CD8-positive, alpha-beta T cell (primary cell): ENCODE measurements at regions of chr19 and their contacts with region 1.

Region 1: DNA sequence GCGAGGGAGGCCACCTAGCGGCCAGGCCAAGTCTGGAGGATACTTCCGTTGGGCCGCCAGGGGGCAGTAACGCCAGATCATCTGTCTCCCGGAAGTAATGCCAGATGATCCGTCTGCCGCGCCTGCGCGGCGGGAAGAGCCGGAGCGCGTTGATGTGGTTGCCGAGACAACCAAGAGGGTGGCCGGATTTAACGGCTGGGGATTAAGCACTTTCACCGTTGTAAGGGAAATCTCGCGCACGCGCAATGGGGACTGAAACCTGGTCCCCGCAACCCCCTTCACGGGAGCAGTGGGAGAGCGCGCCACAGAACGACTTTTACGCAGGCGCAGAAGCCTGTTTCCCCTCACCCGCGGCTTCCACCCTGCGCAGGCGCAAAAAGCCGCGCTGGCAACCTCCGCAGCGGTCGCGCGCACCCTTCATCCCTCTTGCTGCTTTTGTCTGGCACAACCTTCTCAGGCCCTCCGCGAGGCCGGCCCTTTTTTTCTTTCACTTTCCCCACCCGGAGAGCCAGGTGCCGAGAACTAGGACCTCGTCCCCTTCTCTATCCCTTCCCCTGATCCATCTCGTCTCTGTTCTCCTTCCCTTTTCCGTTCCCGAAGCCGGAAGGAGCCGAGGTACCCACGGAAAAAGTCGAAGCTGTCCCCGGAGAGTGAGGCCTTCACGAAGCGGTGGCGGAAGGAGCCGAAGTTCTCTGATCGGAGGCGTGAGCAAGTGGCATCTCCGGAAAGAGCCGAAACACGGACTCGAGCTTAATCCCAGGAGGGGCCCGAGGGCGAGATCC is 886 bp upstream of the U2AF2 start:
- DNase-seq: peak; percentile 98 to 100 (median 99)
- ATAC-seq: peak; percentile 77
- H3K4me3 ChIP-seq: peak overlapping the region; percentile 72 to 89
- H3K4me3 Mint-ChIP-seq: peak overlapping the region; percentile 95
- H3K27ac ChIP-seq: peak overlapping the region; percentile 79 to 100
- H3K27ac Mint-ChIP-seq: peak overlapping the region; percentile 97
- H3K4me1 ChIP-seq: peaks cover 38% of the 10 kb centered on the region
- H3K4me1 Mint-ChIP-seq: peaks cover 44% of the 10 kb centered on the region
- H3K27me3 ChIP-seq: peaks cover 0 to 5% of the 10 kb centered on the region in 2 experiments
- H3K27me3 Mint-ChIP-seq: no peaks in the 10 kb centered on the region
- CTCF ChIP-seq: peak; percentile 100

Region 2: DNA sequence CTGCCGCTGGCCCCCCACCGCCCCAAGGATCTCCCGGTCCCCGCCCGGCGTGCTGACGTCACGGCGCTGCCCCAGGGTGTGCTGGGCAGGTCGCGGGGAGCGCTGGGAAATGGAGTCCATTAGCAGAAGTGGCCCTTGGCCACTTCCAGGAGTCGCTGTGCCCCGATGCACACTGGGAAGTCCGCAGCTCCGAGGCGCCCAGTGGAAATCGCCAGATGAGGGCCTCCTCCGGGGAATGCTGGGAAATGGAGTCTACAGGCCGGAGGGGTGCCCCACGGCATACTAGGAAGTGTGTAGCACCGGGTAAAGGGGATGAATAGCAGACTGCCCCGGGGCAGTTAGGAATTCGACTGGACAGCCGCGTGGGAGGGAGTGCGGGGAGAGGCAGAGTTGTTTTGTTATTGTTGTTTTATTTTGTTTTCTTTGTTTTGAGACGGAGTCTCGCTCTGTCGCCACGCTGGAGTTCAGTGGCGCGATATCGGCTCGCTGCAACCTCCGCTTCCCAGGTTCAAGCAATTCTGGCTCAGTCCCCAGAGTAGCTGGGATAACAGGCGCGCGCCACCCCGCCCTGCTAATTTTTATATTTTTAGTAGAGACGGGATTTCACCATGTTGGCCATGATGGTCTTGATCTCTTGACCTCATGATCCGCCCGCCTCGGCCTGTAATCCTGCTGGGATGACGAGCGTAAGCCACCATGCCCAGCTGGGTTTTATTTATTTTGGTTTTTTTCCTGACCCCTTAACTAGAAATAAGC is 536.1 kb before region 1 on chr19 and contains the start of gene PPP1R12C:
- CTCF ChIA-PET with region 1: no interaction called
- POLR2A ChIA-PET with region 1: no interaction called
- intact Hi-C with region 1: loop called in 1 of 2 experiments (anchors 10 kb)
- DNase-seq: peak; percentile 89 to 99 (median 97)
- ATAC-seq: peak; percentile 89
- H3K4me3 ChIP-seq: peak within 1 kb of the TSS; percentile 83 to 89
- H3K4me3 Mint-ChIP-seq: peak within 1 kb of the TSS; percentile 97
- H3K27ac ChIP-seq: peak within 1 kb of the TSS; percentile 61 to 84
- H3K27ac Mint-ChIP-seq: peak within 1 kb of the TSS; percentile 93
- H3K4me1 ChIP-seq: peaks cover 19% of the 10 kb centered on the region
- H3K4me1 Mint-ChIP-seq: peaks cover 34% of the 10 kb centered on the region
- H3K27me3 ChIP-seq: no peaks in the 10 kb centered on the region
- H3K27me3 Mint-ChIP-seq: no peaks in the 10 kb centered on the region
- CTCF ChIP-seq: no peak
- total RNA-seq, gene PPP1R12C: 93.8 to 97.6 TPM

Region 3: GRCh38 chr19:55476100-55476775 is 177.7 kb before region 1 on chr19 and contains the start of gene ZNF628:
- CTCF ChIA-PET with region 1: no interaction called
- POLR2A ChIA-PET with region 1: interaction called, 6 read pairs
- intact Hi-C with region 1: loop called in 1 of 2 experiments (anchors 1 kb)
- DNase-seq: peak; percentile 95 to 99 (median 98)
- ATAC-seq: peak; percentile 93
- H3K4me3 ChIP-seq: peak within 1 kb of the TSS; percentile 70 to 72
- H3K4me3 Mint-ChIP-seq: peak within 1 kb of the TSS; percentile 85
- H3K27ac ChIP-seq: peak within 1 kb of the TSS; percentile 58 to 91
- H3K27ac Mint-ChIP-seq: peak within 1 kb of the TSS; percentile 88
- H3K4me1 ChIP-seq: peaks cover 17% of the 10 kb centered on the region
- H3K4me1 Mint-ChIP-seq: peaks cover 34% of the 10 kb centered on the region
- H3K27me3 ChIP-seq: no peaks in the 10 kb centered on the region
- H3K27me3 Mint-ChIP-seq: no peaks in the 10 kb centered on the region
- CTCF ChIP-seq: no peak
- total RNA-seq, gene ZNF628: 27.0 to 27.8 TPM

Region 4: DNA sequence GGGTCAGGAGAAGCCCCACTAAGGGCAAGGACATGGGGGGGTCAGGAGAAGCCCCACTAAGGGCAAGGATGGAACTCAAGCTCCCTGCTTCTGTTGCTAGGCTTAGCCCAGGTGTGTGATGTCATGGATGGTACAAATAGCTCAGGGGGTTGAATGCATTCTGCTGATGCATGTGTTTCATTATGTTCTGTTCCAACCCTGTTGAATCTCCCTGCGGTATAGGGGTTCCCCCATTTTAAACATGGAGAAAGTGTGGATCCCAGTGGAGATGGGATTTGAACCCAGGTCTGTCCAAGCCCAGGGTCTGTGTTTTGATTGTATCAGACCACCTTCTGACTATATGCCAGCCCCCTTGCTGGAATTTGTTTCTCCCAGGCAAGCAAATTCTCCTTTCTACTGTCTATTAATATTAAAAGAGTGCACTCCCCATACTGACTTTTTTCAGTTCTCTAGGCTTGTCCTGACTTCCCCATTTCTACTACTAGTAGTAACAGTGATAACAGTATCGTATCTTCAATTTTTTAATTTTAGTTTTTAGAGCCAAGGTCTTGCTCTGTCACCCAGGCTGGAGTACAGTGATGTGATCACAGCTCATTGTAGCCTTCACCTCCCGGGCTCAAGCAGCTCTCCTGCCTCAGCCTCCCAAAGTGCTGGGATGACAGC is 41.8 kb before region 1 on chr19:
- CTCF ChIA-PET with region 1: no interaction called
- POLR2A ChIA-PET with region 1: no interaction called
- intact Hi-C with region 1: no loop called
- DNase-seq: no peak
- ATAC-seq: no peak
- H3K4me3 ChIP-seq: no peak overlapping the region
- H3K4me3 Mint-ChIP-seq: no peak overlapping the region
- H3K27ac ChIP-seq: no peak overlapping the region
- H3K27ac Mint-ChIP-seq: peak overlapping the region; percentile 2
- H3K4me1 ChIP-seq: no peaks in the 10 kb centered on the region
- H3K4me1 Mint-ChIP-seq: peaks cover 37% of the 10 kb centered on the region
- H3K27me3 ChIP-seq: no peaks in the 10 kb centered on the region
- H3K27me3 Mint-ChIP-seq: no peaks in the 10 kb centered on the region
- CTCF ChIP-seq: no peak

Region 5: DNA sequence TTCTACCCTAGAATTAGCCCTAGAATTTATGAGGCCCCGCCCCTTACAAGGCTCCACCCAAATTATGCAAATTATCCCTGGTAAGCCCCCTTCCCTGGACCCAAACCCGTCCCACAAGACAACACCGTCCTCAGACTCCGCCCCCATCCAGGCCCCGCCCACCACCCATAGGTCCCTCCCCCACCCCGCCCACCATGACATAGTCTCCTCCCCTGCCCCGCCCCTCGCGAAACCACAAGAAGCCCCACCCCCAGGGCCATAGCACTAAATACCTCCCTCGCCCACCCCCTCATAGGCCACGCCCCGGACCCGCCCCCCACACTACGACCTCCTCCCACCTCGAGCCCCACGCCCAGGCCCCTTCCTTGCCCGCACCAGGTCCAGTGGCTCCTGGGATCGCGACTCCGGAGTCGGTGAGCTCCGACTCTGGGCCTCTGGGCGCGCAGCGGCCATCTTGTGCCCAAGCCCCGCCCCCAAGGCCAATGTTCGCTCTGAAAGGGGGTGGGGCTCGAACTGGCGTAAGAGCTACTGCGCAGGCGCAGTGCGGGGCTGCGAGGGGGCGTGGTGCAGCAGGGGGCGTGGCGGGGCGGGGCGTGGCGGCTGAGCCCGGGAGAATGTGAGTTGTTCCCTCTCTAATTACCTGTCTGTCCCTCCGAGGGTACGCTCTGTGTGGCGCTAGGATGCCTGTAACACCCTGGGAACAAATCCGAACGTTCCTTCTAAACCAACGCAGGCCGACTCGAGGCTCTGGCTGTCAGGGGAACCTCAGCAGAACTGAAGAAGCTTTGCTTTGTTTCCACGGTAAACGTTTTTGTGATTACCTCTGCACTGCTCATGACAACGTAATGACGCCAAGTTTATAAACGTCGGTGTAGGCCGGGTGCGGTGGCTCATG is 29.6 kb before region 1 on chr19 and contains the start of gene ZNF784:
- CTCF ChIA-PET with region 1: interaction called, 6 read pairs
- POLR2A ChIA-PET with region 1: interaction called, 9 read pairs
- intact Hi-C with region 1: loop called (anchors 1 kb)
- DNase-seq: peak; percentile 87 to 97 (median 93)
- ATAC-seq: peak; percentile 76
- H3K4me3 ChIP-seq: peak within 1 kb of the TSS; percentile 67 to 88
- H3K4me3 Mint-ChIP-seq: peak within 1 kb of the TSS; percentile 91
- H3K27ac ChIP-seq: peak within 1 kb of the TSS; percentile 72 to 92
- H3K27ac Mint-ChIP-seq: peak within 1 kb of the TSS; percentile 98
- H3K4me1 ChIP-seq: peaks cover 50% of the 10 kb centered on the region
- H3K4me1 Mint-ChIP-seq: peaks cover 56% of the 10 kb centered on the region
- H3K27me3 ChIP-seq: no peaks in the 10 kb centered on the region
- H3K27me3 Mint-ChIP-seq: no peaks in the 10 kb centered on the region
- CTCF ChIP-seq: no peak
- total RNA-seq, gene ZNF784: 11.7 to 12.2 TPM

Region 6: DNA sequence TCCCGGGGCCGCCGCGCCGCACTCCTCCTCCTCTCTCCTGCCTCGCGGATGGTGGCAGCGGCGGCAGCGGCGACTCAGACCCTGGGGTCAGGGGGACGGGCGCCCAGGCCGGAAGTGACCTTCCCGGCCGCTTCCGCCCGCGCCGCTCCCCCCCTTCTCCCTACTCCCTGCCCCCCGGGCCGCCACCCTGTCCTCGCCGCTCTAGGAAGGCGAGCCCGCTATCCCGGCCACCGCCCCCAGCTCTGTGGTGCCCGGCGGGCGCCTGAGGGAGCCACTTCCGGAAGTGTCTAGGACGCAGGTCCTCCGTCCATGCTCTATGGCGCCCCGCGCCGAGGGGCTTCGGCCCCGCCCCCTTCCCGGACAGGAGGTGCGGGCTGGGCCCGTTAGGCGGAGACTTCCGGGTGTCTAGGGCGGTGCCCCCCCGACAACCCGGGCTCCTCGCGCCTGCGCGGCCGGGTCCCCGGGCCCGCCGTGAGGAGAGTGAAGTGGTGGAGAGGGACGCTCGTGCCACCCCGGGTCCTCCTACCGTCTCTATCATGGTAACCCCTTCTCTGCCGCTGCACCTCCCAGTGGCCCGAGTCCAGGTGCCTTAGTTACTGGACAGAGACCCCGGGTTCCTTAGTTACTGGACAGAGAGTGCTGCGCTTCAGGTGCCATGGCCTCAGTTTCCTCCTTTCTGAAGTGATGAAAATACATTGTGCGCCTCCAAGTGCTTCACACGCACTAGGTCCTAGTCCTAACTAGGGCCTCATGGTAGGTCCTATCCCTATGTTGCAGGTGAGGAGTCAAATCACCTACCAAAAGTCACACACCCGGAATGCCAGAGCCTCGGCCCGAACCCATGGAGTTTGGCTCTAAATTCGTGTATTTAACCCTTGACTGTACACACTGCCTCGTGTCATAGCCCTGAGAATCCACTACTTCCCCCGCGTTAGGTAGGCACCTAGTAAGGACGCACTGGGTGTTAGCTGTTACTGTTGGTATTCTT is 467.5 kb after region 1 on chr19 and contains the start of gene ZNF787:
- CTCF ChIA-PET with region 1: no interaction called
- POLR2A ChIA-PET with region 1: no interaction called
- intact Hi-C with region 1: loop called (anchors 2 to 10 kb)
- DNase-seq: peak; percentile 94 to 99 (median 97)
- ATAC-seq: peak; percentile 82
- H3K4me3 ChIP-seq: peak within 1 kb of the TSS; percentile 56 to 67
- H3K4me3 Mint-ChIP-seq: peak within 1 kb of the TSS; percentile 88
- H3K27ac ChIP-seq: peak within 1 kb of the TSS; percentile 81 to 97
- H3K27ac Mint-ChIP-seq: peak within 1 kb of the TSS; percentile 94
- H3K4me1 ChIP-seq: peaks cover 24% of the 10 kb centered on the region
- H3K4me1 Mint-ChIP-seq: peaks cover 43% of the 10 kb centered on the region
- H3K27me3 ChIP-seq: no peaks in the 10 kb centered on the region
- H3K27me3 Mint-ChIP-seq: no peaks in the 10 kb centered on the region
- CTCF ChIP-seq: no peak
- total RNA-seq, gene ZNF787: 10.2 to 10.8 TPM

Region 7: DNA sequence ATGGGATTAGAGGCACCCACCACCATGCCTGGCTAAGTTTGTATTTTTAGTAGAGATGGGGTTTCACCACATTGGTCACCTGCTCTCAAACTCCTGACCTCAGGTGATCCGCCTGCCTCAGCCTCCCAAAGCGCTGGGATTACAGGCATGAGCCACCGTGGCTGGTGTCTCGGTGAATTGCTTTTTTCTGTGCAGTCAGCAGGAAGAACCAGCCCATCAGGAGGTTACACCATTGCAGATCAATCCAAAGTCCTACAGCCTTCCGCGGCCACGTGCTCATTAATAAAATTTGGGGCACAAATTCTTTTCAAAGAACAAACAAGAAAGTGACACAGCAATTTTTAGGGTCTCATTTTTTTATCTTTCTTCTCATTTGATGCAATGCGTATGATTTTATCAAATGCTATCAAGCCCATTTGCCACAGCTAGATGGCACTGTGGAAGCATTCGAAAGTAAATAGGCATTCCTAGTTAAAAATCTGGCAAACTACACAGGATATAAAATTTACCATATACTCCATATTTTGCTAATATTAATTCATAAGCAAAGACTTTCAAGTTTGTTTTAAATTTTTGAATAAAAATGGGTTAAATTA is 1072.0 kb after region 1 on chr19:
- CTCF ChIA-PET with region 1: no interaction called
- POLR2A ChIA-PET with region 1: no interaction called
- intact Hi-C with region 1: no loop called
- DNase-seq: no peak
- ATAC-seq: no peak
- H3K4me3 ChIP-seq: no peak overlapping the region
- H3K4me3 Mint-ChIP-seq: no peak overlapping the region
- H3K27ac ChIP-seq: no peak overlapping the region
- H3K27ac Mint-ChIP-seq: no peak overlapping the region
- H3K4me1 ChIP-seq: no peaks in the 10 kb centered on the region
- H3K4me1 Mint-ChIP-seq: no peaks in the 10 kb centered on the region
- H3K27me3 ChIP-seq: no peaks in the 10 kb centered on the region
- H3K27me3 Mint-ChIP-seq: no peaks in the 10 kb centered on the region
- CTCF ChIP-seq: no peak